Activated T-helper 1 cell treated with anti-CD3 and anti-CD28 coated beads, Interleukin-12 subunit alpha, Interleukin-12 subunit beta, Interleukin-2, Interleukin-4 antibody, amounts not matched to agents 30 ng/mL and 10 ng/mL and 1 ng/mL, durations not matched to agents 14 hours and 24 hours and 36 hours (primary cell): ENCODE measurements at regions of chrX and their contacts with region 1.

Region 1: DNA sequence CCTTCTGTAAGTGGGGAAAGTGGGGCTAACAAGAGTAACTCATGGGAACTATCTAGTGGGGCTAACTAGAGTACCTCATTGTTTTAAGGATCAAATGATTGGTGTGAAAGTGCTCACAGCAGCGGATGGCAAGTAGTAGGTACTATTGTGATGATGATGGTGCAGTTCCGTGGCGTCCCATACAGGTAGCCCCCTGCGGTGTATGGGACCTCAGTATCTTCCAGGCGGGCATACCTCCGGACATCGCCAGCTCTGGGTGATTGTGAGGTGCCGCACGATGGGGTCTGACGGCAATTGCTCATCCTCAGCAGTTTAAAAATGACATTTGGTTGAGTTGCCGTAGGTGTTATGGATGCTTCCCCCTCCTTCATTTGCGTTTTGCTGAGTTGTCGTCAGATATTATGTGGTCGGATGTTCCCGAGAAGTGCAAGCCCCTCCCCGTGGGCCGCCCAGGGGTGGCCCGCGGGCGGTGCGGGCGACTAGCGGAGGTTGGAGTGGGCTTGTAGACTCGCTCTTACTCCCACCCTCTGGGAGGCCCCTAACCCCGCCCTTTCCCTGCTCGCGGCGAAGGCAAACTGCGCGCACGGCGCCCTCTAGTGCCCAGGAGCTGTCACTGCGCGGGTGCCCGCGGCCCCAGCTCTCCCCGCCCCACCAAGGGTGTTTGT is 18.3 kb upstream of the GPR101 start:
- DNase-seq: peak; percentile 71
- H3K4me3 Mint-ChIP-seq: peak overlapping the region; percentile 87
- H3K27ac Mint-ChIP-seq: peak overlapping the region; percentile 40
- H3K4me1 Mint-ChIP-seq: peaks cover 11% of the 10 kb centered on the region
- H3K27me3 Mint-ChIP-seq: peaks cover 28% of the 10 kb centered on the region

Region 2: GRCh38 chrX:136797787-136798186 is 254.3 kb before region 1 on chrX:
- intact Hi-C with region 1: no loop called
- DNase-seq: no peak
- H3K4me3 Mint-ChIP-seq: no peak overlapping the region
- H3K27ac Mint-ChIP-seq: peak overlapping the region; percentile 11
- H3K4me1 Mint-ChIP-seq: peaks cover 7% of the 10 kb centered on the region
- H3K27me3 Mint-ChIP-seq: no peaks in the 10 kb centered on the region

Region 3: DNA sequence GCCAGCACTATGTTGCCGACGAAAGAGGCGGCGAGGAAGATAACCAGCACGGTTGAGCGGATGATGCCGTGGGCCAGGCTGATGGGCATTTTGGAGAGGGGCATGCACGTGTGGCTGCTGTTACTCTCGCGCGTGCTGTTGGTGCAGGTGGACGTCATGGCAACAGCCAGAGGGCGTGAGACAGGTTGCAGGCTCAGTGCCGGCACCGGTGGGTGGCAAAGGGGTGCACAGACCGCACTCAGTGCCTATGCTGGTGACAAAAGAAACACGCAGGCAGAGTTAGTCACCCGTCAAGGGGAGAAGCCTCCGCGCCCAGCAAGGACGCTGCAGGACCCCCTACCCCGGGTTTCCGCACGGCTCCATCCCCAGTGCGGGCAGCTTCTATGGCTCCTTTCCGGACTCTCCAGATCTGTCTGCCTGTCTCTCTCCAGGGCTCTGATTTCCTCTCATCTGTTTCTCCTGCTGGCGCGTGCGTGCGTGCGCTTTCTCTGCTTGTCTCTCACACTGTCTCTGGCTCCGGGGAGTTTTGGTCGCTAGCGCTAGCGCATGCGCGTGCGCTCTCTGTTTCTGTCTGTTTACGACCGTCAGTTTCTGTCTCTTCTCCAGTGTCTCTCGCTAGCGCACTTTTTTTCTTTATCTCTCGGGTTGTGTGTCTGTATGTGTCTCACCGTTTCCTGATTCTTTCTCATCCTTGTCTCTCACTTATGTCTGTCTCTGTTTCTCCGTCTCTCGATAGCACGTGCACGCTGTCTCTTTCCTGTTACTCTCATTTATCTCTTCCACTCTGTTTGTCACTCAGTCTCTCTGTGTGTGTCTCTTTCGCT is 20.4 kb before region 1 on chrX:
- intact Hi-C with region 1: loop called (anchors 2 kb)
- DNase-seq: peak; percentile 42
- H3K4me3 Mint-ChIP-seq: no peak overlapping the region
- H3K27ac Mint-ChIP-seq: no peak overlapping the region
- H3K4me1 Mint-ChIP-seq: peaks cover 9% of the 10 kb centered on the region
- H3K27me3 Mint-ChIP-seq: peaks cover 39% of the 10 kb centered on the region

Region 4: GRCh38 chrX:137278825-137279224 is 226.7 kb after region 1 on chrX:
- intact Hi-C with region 1: no loop called
- DNase-seq: no peak
- H3K4me3 Mint-ChIP-seq: no peak overlapping the region
- H3K27ac Mint-ChIP-seq: no peak overlapping the region
- H3K4me1 Mint-ChIP-seq: no peaks in the 10 kb centered on the region
- H3K27me3 Mint-ChIP-seq: peaks cover 5% of the 10 kb centered on the region

Region 5: GRCh38 chrX:137387646-137388045 is 335.5 kb after region 1 on chrX:
- intact Hi-C with region 1: no loop called
- DNase-seq: no peak
- H3K4me3 Mint-ChIP-seq: no peak overlapping the region
- H3K27ac Mint-ChIP-seq: no peak overlapping the region
- H3K4me1 Mint-ChIP-seq: no peaks in the 10 kb centered on the region
- H3K27me3 Mint-ChIP-seq: no peaks in the 10 kb centered on the region